ENCODE measurements at regions of chr19 and their contacts with region 1.

Region 1: DNA sequence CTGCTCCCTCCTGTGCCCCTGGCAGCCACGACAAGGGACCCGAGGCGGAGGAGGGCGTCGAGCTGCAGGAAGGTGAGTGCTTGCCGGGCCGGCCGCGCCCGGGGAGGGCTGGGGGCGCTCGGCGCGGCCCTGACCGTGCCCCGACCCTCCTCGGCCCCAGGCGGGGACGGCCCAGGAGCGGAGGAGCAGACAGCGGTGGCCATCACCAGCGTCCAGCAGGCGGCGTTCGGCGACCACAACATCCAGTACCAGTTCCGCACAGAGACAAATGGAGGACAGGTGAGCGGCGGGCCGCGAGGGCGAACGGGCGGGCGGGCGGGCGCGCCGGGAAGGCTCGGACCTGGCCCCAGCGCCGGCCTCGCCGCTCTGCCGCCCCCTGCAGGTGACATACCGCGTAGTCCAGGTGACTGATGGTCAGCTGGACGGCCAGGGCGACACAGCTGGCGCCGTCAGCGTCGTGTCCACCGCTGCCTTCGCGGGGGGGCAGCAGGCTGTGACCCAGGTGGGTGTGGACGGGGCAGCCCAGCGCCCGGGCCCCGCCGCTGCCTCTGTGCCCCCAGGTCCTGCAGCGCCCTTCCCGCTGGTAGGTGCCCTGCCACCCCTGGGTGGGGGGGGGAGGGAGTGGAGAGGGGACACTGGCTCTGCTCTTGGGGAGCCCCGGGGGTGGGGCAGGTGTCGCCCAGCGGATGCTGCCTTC is 807 bp downstream of the USF2 start:
- DNase-seq: peak; percentile 54 to 87 (median 66)
- ATAC-seq: peak; percentile 52 to 62
- H3K4me3 Mint-ChIP-seq: peak overlapping the region; percentile 64 to 89 (median 72)
- H3K27ac Mint-ChIP-seq: peak overlapping the region in 9 of 10 donors; percentile 62 to 90 (median 83)
- H3K4me1 Mint-ChIP-seq: peaks cover 25 to 57% (median 52%) of the 10 kb centered on the region in 4 donors
- H3K27me3 Mint-ChIP-seq: no peaks in the 10 kb centered on the region

Region 2: DNA sequence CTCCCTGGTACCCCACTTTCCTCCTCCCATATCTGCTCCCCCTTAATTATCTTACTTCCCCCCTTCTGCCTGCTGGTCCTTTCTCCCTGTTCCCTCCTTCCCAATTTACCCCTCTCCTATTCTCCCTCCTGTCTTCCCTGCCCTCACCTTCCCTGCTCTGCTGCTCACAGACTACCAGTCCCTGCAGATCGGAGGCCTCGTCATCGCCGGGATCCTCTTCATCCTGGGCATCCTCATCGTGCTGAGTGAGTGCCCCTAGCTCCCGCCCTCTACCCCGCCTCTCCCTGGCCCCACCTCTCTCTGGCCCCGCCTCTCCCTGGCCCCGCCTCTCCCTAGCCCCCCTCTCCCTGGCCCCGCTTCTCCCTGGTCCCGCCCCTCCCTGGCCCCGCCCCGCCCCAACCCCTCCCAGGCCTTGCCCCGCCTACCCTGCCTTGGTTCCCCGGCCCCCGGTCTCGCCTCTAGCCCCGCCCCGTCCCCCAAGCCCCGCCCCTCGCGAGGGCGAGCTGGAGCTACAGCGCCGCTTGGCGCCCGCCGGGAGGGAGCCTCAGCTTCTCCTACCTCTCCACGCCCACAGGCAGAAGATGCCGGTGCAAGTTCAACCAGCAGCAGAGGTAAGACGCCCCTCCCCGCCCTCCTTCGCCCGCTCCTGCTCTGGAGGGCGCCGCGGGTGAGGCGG is 128.5 kb before region 1 on chr19:
- POLR2A ChIA-PET with region 1: interaction called, 26 read pairs
- DNase-seq: peak; percentile 80 to 98 (median 93)
- ATAC-seq: peak; percentile 77 to 84
- H3K4me3 Mint-ChIP-seq: peak overlapping the region; percentile 75 to 93 (median 87)
- H3K27ac Mint-ChIP-seq: peak overlapping the region; percentile 33 to 94 (median 84)
- H3K4me1 Mint-ChIP-seq: peaks cover 23 to 49% (median 44%) of the 10 kb centered on the region in 4 donors
- H3K27me3 Mint-ChIP-seq: peaks cover 0 to 2% (median 0%) of the 10 kb centered on the region in 5 donors

Region 3: DNA sequence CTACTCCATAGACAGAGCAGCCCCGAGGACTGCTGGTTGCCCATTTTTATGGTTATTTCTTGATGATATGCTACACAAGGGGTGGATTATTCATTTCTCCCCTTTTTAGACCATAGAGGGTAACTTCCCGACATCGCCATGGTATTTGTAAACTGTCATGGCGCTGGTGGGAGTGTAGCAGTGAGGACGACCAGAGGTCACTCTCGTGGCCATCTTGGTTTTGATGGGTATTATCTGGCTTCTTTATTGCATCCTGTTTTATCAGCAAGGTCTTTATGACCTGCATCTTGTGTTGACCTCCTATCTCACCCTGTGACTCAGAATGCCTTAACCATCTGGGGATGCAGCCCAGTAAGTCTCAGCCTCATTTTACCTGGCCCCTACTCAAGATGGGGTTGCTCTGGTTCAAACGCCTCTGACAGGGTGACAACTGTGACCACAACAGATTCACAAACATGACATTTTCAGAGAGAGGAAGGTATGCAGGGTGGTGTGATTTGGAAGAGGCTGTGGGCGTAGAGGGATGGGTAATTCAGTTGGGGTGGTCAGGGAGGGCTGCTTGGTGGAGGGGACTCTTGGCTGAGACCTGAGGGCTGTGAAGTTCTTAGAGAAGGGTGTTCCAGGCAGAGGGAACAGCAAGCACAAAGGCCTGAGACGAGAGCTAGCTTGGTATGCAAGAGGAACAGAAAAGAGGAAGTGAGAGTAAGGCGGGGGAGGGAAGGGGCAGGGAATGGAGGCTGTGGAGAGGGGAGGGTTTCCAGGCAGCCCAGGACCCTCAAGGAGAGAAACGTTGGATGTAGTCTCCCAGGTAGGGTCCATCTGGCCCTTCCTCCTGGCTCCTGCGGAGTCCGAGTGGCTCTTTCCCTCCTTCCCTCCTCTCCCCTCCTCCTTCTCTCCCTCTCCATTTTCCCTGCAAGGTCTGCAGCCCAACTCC is 64.5 kb before region 1 on chr19:
- POLR2A ChIA-PET with region 1: interaction called, 42 read pairs
- DNase-seq: peak in 2 of 10 donors; percentile 16 to 43
- ATAC-seq: no peak
- H3K4me3 Mint-ChIP-seq: peak overlapping the region in 9 of 10 donors; percentile 34 to 80 (median 70)
- H3K27ac Mint-ChIP-seq: peak overlapping the region; percentile 92 to 100 (median 98)
- H3K4me1 Mint-ChIP-seq: peaks cover 36 to 89% (median 81%) of the 10 kb centered on the region in 4 donors
- H3K27me3 Mint-ChIP-seq: no peaks in the 10 kb centered on the region

Region 4: GRCh38 chr19:35236638-35237400 is 32.8 kb before region 1 on chr19:
- POLR2A ChIA-PET with region 1: interaction called, 18 read pairs
- DNase-seq: peak in 1 of 10 donors; percentile 66
- ATAC-seq: no peak
- H3K4me3 Mint-ChIP-seq: no peak overlapping the region
- H3K27ac Mint-ChIP-seq: peak overlapping the region in 8 of 10 donors; percentile 8 to 72 (median 62)
- H3K4me1 Mint-ChIP-seq: peaks cover 19 to 35% (median 32%) of the 10 kb centered on the region in 4 donors
- H3K27me3 Mint-ChIP-seq: no peaks in the 10 kb centered on the region

Region 5: DNA sequence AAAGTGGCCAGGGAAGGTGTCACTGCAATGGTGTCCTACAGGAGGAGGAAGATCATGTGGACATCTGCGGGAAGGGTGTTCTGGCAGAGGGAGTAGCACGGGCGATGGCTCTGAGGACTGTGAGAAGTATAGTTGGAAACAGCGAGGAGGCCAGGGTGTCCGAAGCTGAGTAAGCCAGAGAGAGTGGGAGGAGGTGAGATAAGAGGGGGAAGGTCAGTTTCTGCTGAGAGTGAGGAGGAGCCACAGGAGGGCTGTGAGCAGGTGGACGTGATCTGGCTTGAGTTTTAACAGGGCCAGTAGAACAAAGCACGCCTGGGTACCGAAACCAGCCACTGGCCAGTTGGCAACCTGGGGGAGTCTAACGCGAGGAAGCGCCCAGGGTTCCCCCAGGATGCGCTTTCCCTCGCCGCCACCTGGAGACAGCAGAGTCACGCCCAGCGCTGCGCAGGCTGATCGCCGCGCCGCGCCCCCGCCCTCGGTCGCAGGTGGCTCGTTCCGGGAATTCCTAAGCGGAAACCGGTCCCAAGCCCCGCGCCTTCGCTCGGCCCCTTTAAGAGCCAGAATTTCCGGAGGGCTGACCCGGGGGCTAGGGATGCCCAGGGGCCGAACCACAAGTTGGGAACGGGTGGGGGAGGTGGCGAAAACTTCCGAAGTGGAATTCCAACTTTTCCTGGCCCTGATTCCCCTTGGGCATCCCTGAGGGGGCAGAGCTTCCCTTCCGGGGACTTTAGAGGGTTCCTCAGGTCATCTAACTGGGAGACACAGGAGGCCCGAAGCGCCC is 21.9 kb before region 1 on chr19:
- POLR2A ChIA-PET with region 1: interaction called, 91 read pairs
- DNase-seq: peak; percentile 32 to 73 (median 55)
- ATAC-seq: peak; percentile 41 to 46
- H3K4me3 Mint-ChIP-seq: peak overlapping the region; percentile 93 to 98 (median 94)
- H3K27ac Mint-ChIP-seq: peak overlapping the region; percentile 93 to 99 (median 98)
- H3K4me1 Mint-ChIP-seq: peaks cover 23 to 49% (median 42%) of the 10 kb centered on the region in 4 donors
- H3K27me3 Mint-ChIP-seq: peaks cover 0 to 2% (median 0%) of the 10 kb centered on the region in 5 donors